GM12878 (cell line): ENCODE measurements at regions of chr1 and their contacts with region 1.

Region 1: GRCh38 chr1:31955917-31956736 is 18.0 kb upstream of the PTP4A2 start:
- DNase-seq: peak; percentile 91
- ATAC-seq: peak; percentile 86
- H3K4me3 ChIP-seq: peak overlapping the region; percentile 25; the same call in 1 of the 2 replicates
- H3K27ac ChIP-seq: peak overlapping the region; percentile 98
- H3K4me1 ChIP-seq: peaks cover 75% of the 10 kb centered on the region
- H3K27me3 ChIP-seq: no peaks in the 10 kb centered on the region
- CTCF ChIP-seq: peak; percentile 26 to 42 (median 42); a peak in 4 of 6 replicates
- EP300 ChIP-seq: peak; percentile 84 to 88
- POLR2A ChIP-seq: peak; percentile 65
- RAD21 ChIP-seq: peak; percentile 48; the same call in 1 of the 2 replicates

Region 2: DNA sequence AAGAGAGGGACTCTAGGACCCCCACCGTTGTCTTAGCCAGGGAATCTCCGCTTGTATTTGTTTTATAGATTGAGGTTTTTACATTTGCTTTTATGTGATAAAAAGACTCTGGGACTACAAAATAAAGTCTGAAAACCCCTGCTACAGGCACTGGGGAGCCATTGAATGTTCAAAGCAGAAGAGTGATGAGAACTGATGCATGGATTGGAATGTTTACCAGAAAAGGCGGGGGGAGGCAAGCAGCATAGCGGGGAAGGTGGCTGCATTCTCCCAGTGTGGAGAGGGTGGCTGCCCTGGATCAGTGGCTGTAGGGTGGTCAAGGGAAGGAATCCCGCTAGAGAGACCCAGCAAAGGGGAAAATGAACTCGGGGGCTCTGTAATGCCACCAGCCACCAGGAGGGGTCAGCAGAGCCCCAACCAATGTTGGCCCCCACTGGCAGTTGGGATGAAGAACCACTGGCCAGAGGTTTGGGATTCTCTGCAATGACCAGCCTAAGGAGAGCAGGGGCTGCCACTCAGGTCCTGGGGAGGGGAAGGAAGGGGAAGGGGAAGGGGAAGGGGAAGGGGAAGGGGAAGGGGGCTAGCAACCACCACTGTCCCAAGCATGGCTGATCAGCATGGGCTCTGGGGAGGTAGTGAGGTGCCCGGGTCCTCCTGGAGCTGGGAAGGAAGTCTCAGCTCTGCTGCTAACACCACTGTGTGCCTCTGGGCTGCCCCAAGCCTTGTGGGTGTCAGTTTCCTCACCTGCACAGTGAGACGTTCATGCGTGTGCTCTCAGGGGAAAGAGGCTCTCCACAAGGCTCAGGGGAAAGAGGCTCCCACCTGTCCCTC is 292.3 kb before region 1 on chr1:
- CTCF ChIA-PET with region 1: interaction called, 4 read pairs
- POLR2A ChIA-PET with region 1: no interaction called
- RAD21 ChIA-PET with region 1: no interaction called
- SMC1A ChIA-PET with region 1: no interaction called
- in situ Hi-C with region 1: no loop called
- intact Hi-C with region 1: loop called (anchors 5 kb)
- DNase-seq: no peak
- ATAC-seq: peak; percentile 60
- H3K4me3 ChIP-seq: no peak overlapping the region
- H3K27ac ChIP-seq: no peak overlapping the region
- H3K4me1 ChIP-seq: no peaks in the 10 kb centered on the region
- H3K27me3 ChIP-seq: no peaks in the 10 kb centered on the region; a peak in 1 of 4 replicates
- CTCF ChIP-seq: peak; percentile 92 to 95 (median 95)
- EP300 ChIP-seq: no peak
- POLR2A ChIP-seq: no peak
- RAD21 ChIP-seq: peak; percentile 93

Region 3: DNA sequence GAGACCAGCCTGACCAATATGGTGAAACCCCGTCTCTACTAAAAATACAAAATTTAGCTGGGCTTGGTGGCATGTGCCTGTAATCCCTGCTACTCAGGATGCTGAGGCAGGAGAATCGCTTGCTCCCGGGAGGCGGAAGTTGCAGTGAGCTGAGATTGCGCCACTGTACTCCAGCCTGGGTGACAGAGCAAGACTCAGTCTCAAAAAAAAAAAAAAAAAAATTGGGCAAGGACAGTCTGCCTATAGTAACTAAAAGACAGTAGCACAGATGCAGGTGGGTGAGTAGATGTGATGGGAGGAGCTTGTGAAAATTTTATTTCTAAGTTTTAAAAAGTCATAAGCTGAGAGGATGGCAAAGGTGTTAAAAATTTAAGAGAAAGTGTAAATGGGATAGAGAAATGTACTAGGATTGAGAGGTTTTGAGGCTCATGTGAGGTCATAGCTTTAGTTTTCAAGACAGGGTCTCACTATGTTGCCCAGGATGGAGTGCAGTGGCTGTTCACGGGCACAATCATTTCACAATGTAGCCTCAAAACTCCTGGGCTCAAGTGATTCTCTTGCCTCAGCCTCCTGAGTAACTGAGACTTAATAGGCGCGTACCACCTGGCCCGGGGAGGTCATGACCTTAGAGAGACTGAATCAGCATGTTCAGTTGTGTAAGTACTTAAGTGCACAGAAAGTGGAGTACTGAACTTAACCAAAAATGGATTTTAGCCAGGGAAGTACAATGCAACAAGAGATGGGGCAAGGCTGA is 51.6 kb before region 1 on chr1:
- CTCF ChIA-PET with region 1: interaction called, 3 read pairs
- POLR2A ChIA-PET with region 1: interaction called, 15 read pairs
- RAD21 ChIA-PET with region 1: no interaction called
- SMC1A ChIA-PET with region 1: interaction called, 26 read pairs
- in situ Hi-C with region 1: no loop called
- intact Hi-C with region 1: no loop called
- DNase-seq: no peak
- ATAC-seq: peak; percentile 16; the same call in 2 of the 3 replicates
- H3K4me3 ChIP-seq: no peak overlapping the region
- H3K27ac ChIP-seq: no peak overlapping the region
- H3K4me1 ChIP-seq: peaks cover 13% of the 10 kb centered on the region
- H3K27me3 ChIP-seq: no peaks in the 10 kb centered on the region
- CTCF ChIP-seq: no peak
- EP300 ChIP-seq: no peak
- POLR2A ChIP-seq: no peak
- RAD21 ChIP-seq: no peak

Region 4: GRCh38 chr1:31923901-31924535 is 32.1 kb before region 1 on chr1:
- CTCF ChIA-PET with region 1: interaction called, 12 read pairs
- POLR2A ChIA-PET with region 1: interaction called, 12 read pairs
- RAD21 ChIA-PET with region 1: interaction called, 26 read pairs
- SMC1A ChIA-PET with region 1: interaction called, 28 read pairs
- in situ Hi-C with region 1: no loop called
- intact Hi-C with region 1: loop called (anchors 10 kb)
- DNase-seq: no peak
- ATAC-seq: 0 out of 3 replicates have a peak, but pooled peaks have one; percentile 11
- H3K4me3 ChIP-seq: peak overlapping the region; percentile 43; the same call in 1 of the 2 replicates
- H3K27ac ChIP-seq: 0 out of 2 replicates have a peak overlapping the region, but pooled peaks have one; percentile 27
- H3K4me1 ChIP-seq: peaks cover 19% of the 10 kb centered on the region
- H3K27me3 ChIP-seq: no peaks in the 10 kb centered on the region
- CTCF ChIP-seq: no peak
- EP300 ChIP-seq: no peak
- POLR2A ChIP-seq: no peak
- RAD21 ChIP-seq: no peak

Region 5: GRCh38 chr1:31938174-31938950 is 17.8 kb before region 1 on chr1 and contains the start of gene PTP4A2:
- CTCF ChIA-PET with region 1: interaction called, 565 read pairs
- POLR2A ChIA-PET with region 1: interaction called, 153 read pairs
- RAD21 ChIA-PET with region 1: interaction called, 163 read pairs
- SMC1A ChIA-PET with region 1: interaction called, 315 read pairs
- in situ Hi-C with region 1: no loop called
- intact Hi-C with region 1: loop called (anchors 1 kb)
- DNase-seq: peak; percentile 97
- ATAC-seq: peak; percentile 76
- H3K4me3 ChIP-seq: peak within 1 kb of the TSS; percentile 84
- H3K27ac ChIP-seq: peak within 1 kb of the TSS; percentile 93
- H3K4me1 ChIP-seq: peaks cover 33% of the 10 kb centered on the region
- H3K27me3 ChIP-seq: no peaks in the 10 kb centered on the region
- CTCF ChIP-seq: peak; percentile 37 to 72 (median 56); a peak in 5 of 6 replicates
- EP300 ChIP-seq: peak; percentile 37 to 61
- POLR2A ChIP-seq: peak; percentile 73
- RAD21 ChIP-seq: no peak
- polyA plus RNA-seq, gene PTP4A2: 268 to 424 TPM

Region 6: GRCh38 chr1:32005522-32005921 is 49.4 kb after region 1 on chr1:
- CTCF ChIA-PET with region 1: interaction called, 68 read pairs
- POLR2A ChIA-PET with region 1: interaction called, 4 read pairs
- RAD21 ChIA-PET with region 1: no interaction called
- SMC1A ChIA-PET with region 1: interaction called, 4 read pairs
- in situ Hi-C with region 1: no loop called
- intact Hi-C with region 1: no loop called
- DNase-seq: peak; percentile 43
- ATAC-seq: peak; percentile 88
- H3K4me3 ChIP-seq: no peak overlapping the region
- H3K27ac ChIP-seq: no peak overlapping the region
- H3K4me1 ChIP-seq: peaks cover 25% of the 10 kb centered on the region
- H3K27me3 ChIP-seq: no peaks in the 10 kb centered on the region
- CTCF ChIP-seq: no peak
- EP300 ChIP-seq: no peak
- POLR2A ChIP-seq: no peak
- RAD21 ChIP-seq: no peak

Region 7: GRCh38 chr1:32413507-32414185 is 457.5 kb after region 1 on chr1:
- CTCF ChIA-PET with region 1: no interaction called
- POLR2A ChIA-PET with region 1: no interaction called
- RAD21 ChIA-PET with region 1: no interaction called
- SMC1A ChIA-PET with region 1: no interaction called
- in situ Hi-C with region 1: no loop called
- intact Hi-C with region 1: loop called (anchors 5 kb)
- DNase-seq: peak; percentile 48
- ATAC-seq: peak; percentile 99
- H3K4me3 ChIP-seq: no peak overlapping the region
- H3K27ac ChIP-seq: no peak overlapping the region
- H3K4me1 ChIP-seq: no peaks in the 10 kb centered on the region; the same call in 1 of the 2 replicates
- H3K27me3 ChIP-seq: no peaks in the 10 kb centered on the region; a peak in 1 of 4 replicates
- CTCF ChIP-seq: peak; percentile 76 to 82 (median 78)
- EP300 ChIP-seq: no peak
- POLR2A ChIP-seq: no peak
- RAD21 ChIP-seq: peak; percentile 86